ENCODE measurements at regions of chr16 and their contacts with region 1.

Region 1: DNA sequence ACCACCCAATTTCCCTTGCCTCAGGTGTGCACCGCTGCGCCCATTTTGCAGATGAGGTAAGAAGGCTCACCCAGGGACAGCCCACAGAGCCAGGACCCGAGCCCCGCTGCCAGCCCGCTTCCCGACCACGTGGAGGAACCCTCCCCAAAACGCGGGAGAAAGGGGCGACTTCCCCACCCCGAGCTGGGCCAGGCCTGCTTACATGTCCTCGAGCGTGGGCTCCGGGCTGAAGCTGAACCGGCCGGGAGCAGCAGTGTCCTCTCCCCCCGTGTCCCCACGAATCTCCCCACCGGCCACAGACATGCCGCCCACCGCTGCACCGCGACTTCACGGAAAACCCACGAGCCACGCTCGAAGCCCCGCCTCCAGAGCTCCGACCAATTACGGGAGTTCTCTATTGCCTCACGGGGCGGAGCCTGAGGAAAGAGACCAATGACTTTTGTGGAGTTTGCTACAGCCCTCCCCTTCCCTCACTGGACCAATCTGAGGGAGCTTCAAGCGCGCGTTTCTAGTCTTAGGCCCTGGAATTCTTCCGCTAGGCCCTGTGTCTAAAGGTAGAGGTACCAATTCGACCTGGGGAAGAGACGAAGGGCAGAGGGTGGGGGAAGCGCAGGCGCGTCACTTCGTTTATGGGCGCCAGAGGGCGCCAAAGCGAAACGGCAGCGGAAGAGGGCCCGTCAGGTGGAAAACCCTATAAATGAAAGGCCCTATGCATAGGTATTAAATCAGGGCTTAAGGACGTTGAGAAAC is at the start of gene DCTPP1:
- DNase-seq: peak; percentile 98
- H3K4me3 Mint-ChIP-seq: no peak within 1 kb of the TSS
- H3K27ac Mint-ChIP-seq: no peak within 1 kb of the TSS
- H3K4me1 Mint-ChIP-seq: peaks cover 39% of the 10 kb centered on the region
- H3K27me3 Mint-ChIP-seq: no peaks in the 10 kb centered on the region
- total RNA-seq, gene DCTPP1: 69.9 to 73.0 TPM

Region 2: GRCh38 chr16:30417529-30418349 is 12.1 kb before region 1 on chr16:
- CTCF ChIA-PET with region 1: interaction called, 17 read pairs
- intact Hi-C with region 1: no loop called
- DNase-seq: peak; percentile 85
- H3K4me3 Mint-ChIP-seq: peak overlapping the region; percentile 52
- H3K27ac Mint-ChIP-seq: no peak overlapping the region
- H3K4me1 Mint-ChIP-seq: peaks cover 31% of the 10 kb centered on the region
- H3K27me3 Mint-ChIP-seq: no peaks in the 10 kb centered on the region

Region 3: DNA sequence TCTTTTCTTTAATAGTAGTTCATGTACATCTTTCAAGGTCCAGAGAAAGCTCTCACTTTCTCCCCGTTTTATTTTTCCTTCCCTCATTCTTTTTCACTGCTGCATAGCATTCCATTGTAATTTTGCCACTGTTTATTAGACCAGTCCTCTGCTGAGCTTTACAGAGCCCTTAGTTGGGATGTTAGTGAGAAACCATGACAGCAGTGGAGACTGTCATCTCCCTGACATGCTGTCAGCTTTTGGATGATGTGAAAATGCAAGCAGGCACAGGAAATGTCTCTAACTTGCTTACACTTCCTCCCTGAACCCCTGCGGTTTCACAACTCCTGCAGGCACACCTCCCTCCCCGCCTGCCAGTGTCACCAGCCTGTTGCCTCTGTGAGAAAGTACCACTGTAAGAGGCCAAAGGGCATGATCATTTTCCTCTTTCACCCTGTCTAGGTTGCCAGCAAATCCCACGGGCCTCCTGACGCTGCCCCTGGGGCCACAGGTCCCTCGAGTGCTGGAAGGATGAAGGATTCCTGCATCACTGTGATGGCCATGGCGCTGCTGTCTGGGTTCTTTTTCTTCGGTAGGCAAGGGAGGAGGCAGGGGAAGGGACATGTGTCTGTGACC is 42.6 kb after region 1 on chr16 and contains the start of gene ITGAL:
- CTCF ChIA-PET with region 1: interaction called, 20 read pairs
- intact Hi-C with region 1: loop called (anchors 1 kb)
- DNase-seq: peak; percentile 95
- H3K4me3 Mint-ChIP-seq: peak within 1 kb of the TSS; percentile 92
- H3K27ac Mint-ChIP-seq: peak within 1 kb of the TSS; percentile 92
- H3K4me1 Mint-ChIP-seq: peaks cover 70% of the 10 kb centered on the region
- H3K27me3 Mint-ChIP-seq: no peaks in the 10 kb centered on the region
- total RNA-seq, gene ITGAL: 83.8 to 89.0 TPM

Region 4: DNA sequence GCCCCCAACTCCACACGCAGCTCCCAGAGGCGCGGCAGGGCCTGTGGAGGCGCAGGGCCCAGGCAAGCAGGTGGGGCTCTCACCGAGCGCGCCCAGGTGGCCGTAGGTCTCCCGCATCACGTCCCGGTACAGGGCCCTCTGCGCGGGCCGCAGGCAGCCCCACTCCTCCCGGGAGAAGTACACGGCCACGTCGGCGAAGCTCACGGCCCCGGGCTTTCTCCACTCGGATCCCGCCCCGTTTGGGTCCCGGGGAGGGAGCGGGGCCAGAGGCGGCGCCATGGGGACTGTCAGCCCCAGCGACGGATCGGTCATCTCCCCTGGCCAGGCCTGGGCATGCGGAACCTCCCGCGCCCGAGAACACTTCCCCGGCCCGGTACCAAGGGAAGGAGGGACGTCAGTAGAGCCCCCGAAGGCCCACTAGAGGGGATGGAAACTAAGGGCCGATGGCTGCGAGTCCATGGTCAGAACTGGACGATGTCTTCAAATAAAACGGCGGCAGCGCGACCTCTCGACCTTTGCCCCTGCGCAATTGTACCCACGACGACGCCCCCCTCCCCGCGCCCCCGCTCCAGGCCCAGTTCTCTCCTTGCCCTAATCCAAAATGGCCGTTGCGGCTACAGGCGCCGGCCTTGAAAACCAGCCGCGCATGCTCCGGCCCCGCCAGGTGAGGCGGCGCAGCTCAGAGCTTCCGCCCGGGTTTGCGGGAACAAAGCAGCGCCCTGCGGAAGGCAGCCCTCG is 104.7 kb after region 1 on chr16 and contains the start of gene ZNF747:
- CTCF ChIA-PET with region 1: interaction called, 22 read pairs
- intact Hi-C with region 1: loop called (anchors 1 kb)
- DNase-seq: peak; percentile 94
- H3K4me3 Mint-ChIP-seq: peak within 1 kb of the TSS; percentile 96
- H3K27ac Mint-ChIP-seq: peak within 1 kb of the TSS; percentile 99
- H3K4me1 Mint-ChIP-seq: peaks cover 49% of the 10 kb centered on the region
- H3K27me3 Mint-ChIP-seq: no peaks in the 10 kb centered on the region
- total RNA-seq, gene ZNF747: 5.1 to 6.1 TPM

Region 5: DNA sequence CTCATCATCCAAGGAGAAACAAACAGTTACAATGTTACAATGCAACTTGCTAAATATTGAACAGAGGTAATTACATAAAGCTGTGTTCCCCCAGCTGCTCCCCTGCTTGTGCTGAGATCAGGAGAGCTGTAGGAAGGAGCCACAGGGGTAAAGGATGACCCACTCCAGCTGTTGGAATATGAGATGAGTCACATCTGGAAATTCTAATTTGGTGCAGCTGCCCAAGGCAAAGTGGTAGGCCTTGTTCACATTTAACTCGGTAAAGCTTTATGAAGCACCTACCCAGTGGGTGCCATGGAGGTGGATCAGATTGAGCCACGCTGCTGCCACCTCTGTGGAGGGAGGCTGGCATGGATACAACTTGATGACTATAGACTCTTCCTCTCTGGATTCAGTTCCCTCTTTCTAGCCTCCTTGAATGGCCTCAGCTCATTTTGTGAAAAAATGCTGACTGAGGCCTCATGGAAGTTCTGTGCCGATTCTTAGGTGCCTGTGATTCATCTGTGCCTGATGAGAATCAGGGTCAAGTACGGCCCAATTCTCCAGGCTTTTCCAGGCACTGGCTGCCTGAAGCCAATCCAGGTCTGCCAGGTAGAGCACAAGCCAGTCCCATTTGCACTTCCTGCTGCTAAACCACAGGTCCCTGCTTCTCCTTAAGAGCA is 172.9 kb after region 1 on chr16:
- CTCF ChIA-PET with region 1: interaction called, 31 read pairs
- intact Hi-C with region 1: loop called (anchors 1 kb)
- DNase-seq: no peak
- H3K4me3 Mint-ChIP-seq: no peak overlapping the region
- H3K27ac Mint-ChIP-seq: no peak overlapping the region
- H3K4me1 Mint-ChIP-seq: peaks cover 10% of the 10 kb centered on the region
- H3K27me3 Mint-ChIP-seq: no peaks in the 10 kb centered on the region

Region 6: DNA sequence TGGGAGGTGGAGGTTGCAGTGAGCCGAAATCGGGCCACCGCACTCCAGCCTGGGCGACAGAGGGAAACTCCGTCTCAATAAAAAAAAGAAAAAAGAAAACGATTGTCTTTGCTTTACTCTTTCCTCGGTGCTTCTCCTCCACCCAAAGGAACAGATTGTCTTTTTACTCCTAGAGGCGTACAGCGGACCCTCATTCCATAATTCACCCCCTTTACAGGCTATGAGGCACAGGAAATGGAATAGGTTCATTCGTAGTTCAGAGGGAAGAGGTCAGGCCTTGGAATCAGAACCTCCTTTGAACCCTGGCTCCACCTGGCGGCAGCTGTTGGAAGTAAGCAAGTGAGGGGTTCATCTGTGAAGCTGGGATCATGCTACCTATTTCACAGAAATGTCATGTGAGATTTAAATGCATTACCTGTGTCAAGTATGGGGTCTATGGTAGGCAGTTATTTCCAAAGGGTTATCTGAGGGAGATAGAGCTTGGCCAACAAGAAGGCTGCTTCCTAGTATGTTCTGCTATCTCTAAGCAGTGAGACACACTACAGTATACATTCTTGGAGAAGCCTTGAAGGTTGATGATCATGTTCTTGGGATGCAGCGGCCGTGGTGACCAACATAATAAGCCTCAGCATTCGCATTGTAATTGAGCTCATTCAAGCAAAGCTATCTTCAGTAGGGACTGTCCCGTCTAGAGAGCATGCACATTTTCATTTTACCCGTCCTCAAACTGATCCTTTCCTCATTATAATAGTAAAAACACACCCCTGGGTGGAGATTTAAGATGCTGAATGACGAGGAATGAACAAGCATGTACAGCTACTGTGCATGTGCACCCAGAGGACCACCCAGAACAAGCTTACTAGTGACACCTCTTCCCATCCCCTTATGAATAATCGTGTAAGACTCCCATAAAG is 199.0 kb after region 1 on chr16:
- CTCF ChIA-PET with region 1: interaction called, 15 read pairs
- intact Hi-C with region 1: loop called (anchors 1 kb)
- DNase-seq: peak; percentile 97
- H3K4me3 Mint-ChIP-seq: peak overlapping the region; percentile 55
- H3K27ac Mint-ChIP-seq: peak overlapping the region; percentile 82
- H3K4me1 Mint-ChIP-seq: peaks cover 8% of the 10 kb centered on the region
- H3K27me3 Mint-ChIP-seq: no peaks in the 10 kb centered on the region

Region 7: GRCh38 chr16:30663820-30664396 is 234.1 kb after region 1 on chr16:
- CTCF ChIA-PET with region 1: no interaction called
- intact Hi-C with region 1: no loop called
- DNase-seq: no peak
- H3K4me3 Mint-ChIP-seq: no peak overlapping the region
- H3K27ac Mint-ChIP-seq: peak overlapping the region; percentile 98
- H3K4me1 Mint-ChIP-seq: peaks cover 37% of the 10 kb centered on the region
- H3K27me3 Mint-ChIP-seq: no peaks in the 10 kb centered on the region

Measured in activated naive CD4-positive, alpha-beta T cell treated with anti-CD3 and anti-CD28 coated beads for 36 hours (primary cell).